Thyroid gland (tissue), 4 donors: ENCODE measurements at regions of chr18 and their contacts with region 1.

Region 1: DNA sequence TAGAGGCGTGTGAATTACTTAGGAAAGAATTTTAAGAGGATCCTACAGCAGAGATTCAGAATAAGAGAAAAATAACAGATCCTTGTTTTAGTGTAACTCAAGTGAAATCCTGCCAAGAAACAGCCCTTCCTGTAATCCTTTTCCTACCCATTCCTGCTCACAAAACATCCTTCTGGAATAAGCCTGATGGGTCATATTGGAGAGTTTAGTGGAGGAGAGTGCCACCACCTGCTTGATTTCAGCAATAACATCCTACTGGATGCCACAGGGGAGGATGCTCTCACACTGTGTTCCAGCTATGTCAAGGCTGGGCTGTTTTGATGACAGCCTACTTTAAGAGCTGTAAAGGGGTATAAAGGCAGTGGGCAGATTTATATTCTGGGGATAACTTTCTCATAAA is 54.8 kb upstream of the CCDC178 start:
- DNase-seq: peak; percentile 36 to 50
- H3K4me3 ChIP-seq: no peak overlapping the region
- H3K27ac ChIP-seq: no peak overlapping the region
- H3K4me1 ChIP-seq: no peaks in the 10 kb centered on the region
- H3K27me3 ChIP-seq: no peaks in the 10 kb centered on the region
- CTCF ChIP-seq: peak; percentile 19 to 86 (median 66)
- POLR2A ChIP-seq: no peak

Region 2: GRCh38 chr18:33231474-33232317 is 263.6 kb before region 1 on chr18:
- intact Hi-C with region 1: loop called (anchors 5 kb)
- DNase-seq: peak; percentile 66 to 79
- H3K4me3 ChIP-seq: no peak overlapping the region
- H3K27ac ChIP-seq: no peak overlapping the region
- H3K4me1 ChIP-seq: no peaks in the 10 kb centered on the region
- H3K27me3 ChIP-seq: no peaks in the 10 kb centered on the region
- CTCF ChIP-seq: peak; percentile 71 to 90 (median 82)
- POLR2A ChIP-seq: no peak

Region 3: DNA sequence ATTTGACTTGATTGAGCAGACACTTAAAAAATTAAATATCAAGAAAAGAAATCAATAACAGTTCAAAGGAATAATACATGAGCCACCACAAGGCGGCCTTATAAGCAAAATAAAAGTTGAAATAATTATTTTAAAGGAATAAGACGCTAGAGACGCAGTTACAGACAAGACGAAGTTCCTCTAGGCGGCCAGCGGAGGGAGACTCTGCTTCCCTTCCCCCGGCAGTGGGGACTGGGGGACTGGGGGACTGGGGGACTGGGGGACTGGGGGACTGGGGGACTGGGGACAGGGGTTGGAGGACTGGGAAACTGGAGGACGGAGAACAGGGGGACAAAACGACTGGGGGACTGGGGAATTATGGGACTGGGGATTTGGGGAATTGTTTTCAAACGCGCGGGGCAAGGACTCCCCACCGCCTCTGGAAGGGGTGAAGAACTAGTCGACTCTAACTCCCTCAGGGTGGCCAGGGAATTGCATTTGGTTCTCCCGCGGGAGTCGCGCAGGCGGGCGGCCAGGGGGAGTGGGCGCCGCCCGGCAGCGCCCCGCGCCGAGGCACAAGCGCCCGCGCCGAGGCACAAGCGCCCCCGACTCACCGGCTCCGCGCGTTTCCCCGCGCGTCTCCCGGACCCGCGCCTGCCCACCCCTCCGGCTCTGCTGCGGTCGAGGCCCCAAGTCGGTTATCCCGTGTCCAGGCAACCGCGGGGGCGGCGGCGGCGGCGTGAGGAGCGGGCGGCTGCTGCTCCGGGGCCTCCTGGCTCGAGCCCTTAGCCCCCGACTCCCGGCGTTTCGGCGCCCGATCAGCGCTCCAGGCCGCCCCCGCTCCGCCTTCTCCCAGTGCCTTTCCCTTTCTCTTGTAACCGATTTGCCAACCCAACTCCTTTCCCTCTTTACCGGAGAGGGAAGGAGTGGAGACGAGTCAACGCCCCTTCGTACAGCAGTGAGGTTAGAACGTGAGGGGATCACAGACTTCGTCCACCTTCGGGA is 54.9 kb before region 1 on chr18 and contains the start of gene CCDC178:
- intact Hi-C with region 1: loop called (anchors 5 kb)
- DNase-seq: peak; percentile 58 to 73
- H3K4me3 ChIP-seq: peak within 1 kb of the TSS in 2 of 3 donors; percentile 47 to 65
- H3K27ac ChIP-seq: peak within 1 kb of the TSS; percentile 18 to 65 (median 48)
- H3K4me1 ChIP-seq: peaks cover 4 to 5% of the 10 kb centered on the region in 2 donors
- H3K27me3 ChIP-seq: no peaks in the 10 kb centered on the region
- CTCF ChIP-seq: peak; percentile 24 to 80 (median 58)
- POLR2A ChIP-seq: peak in 1 of 2 donors; percentile 18
- total RNA-seq, gene CCDC178: 1.4 to 3.1 (median 1.7) TPM in 3 of 4 donors, not detected in the other